ENCODE measurements at regions of chr2 and their contacts with region 1.

Region 1: GRCh38 chr2:85162746-85163301 is 29.6 kb downstream of the TCF7L1 start:
- DNase-seq: no peak
- H3K4me3 ChIP-seq: no peak overlapping the region
- H3K27ac ChIP-seq: peak overlapping the region in 1 of 2 donors; percentile 20
- H3K4me1 ChIP-seq: peaks cover 8 to 21% of the 10 kb centered on the region in 2 donors
- H3K27me3 ChIP-seq: no peaks in the 10 kb centered on the region
- CTCF ChIP-seq: no peak
- POLR2A ChIP-seq: no peak

Region 2: GRCh38 chr2:84459944-84460429 is 702.8 kb before region 1 on chr2:
- intact Hi-C with region 1: loop called (anchors 5 kb)
- DNase-seq: no peak
- H3K4me3 ChIP-seq: peak overlapping the region; percentile 68 to 99 (median 93)
- H3K27ac ChIP-seq: peak overlapping the region; percentile 87 to 89
- H3K4me1 ChIP-seq: peaks cover 5% of the 10 kb centered on the region in 2 donors
- H3K27me3 ChIP-seq: no peaks in the 10 kb centered on the region
- CTCF ChIP-seq: no peak
- POLR2A ChIP-seq: no peak

Region 3: DNA sequence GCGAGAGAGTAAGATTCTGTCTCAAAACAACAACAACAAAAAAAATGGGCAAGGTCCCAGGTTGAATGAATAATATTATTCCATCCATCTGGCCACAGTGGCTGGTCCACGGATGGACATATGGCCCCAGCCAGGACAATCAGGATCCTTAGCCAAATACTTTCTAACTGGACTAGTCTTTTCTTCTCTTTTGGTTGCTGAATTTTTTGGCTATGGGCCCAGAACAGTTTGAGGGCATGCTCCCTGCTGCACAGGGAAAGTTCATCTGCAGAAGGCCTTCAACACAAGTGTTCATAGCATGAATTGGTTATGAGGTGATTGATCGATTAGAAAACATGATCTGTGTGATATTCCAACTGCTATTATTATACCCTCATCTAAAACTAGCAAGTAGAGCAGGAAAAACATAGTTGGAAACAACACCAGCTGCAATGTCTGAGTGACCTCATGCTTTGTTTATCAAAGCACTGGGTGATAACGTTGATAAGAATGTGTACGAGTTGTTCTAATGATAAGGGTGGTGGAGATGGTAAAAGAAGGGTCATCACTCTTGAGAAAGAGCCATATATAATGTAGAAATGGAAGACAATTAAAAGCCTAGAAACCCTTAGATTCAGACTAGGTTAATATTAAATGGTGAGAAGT is 1508.6 kb after region 1 on chr2:
- intact Hi-C with region 1: no loop called
- DNase-seq: no peak
- H3K4me3 ChIP-seq: no peak overlapping the region
- H3K27ac ChIP-seq: no peak overlapping the region
- H3K4me1 ChIP-seq: no peaks in the 10 kb centered on the region
- H3K27me3 ChIP-seq: no peaks in the 10 kb centered on the region
- CTCF ChIP-seq: no peak
- POLR2A ChIP-seq: no peak

Measured in breast epithelium (tissue), 4 donors.